Posterior cingulate gyrus (tissue), 11 donors: ENCODE measurements at regions of chr3 and their contacts with region 1.

Region 1: DNA sequence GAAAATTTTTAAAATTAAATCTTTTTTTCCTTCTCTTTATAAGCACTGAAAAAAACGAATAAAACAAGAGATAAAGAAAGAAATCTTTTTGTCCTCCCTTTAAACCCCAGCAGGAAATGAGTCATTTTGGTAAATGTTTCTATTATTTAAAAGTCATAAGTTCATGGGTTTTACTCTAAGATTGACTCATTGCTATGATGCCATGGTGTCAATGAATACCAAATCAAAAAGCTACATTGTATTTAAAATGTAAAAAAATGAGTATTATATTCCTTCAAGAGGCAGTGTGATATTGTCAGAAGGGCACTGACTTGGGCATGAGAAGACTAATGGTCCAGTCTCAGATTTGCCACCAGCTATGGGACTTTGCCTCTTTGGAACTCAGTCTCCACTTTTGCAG is 303.4 kb upstream of the DNAJC19 start:
- DNase-seq: no peak

Region 2: DNA sequence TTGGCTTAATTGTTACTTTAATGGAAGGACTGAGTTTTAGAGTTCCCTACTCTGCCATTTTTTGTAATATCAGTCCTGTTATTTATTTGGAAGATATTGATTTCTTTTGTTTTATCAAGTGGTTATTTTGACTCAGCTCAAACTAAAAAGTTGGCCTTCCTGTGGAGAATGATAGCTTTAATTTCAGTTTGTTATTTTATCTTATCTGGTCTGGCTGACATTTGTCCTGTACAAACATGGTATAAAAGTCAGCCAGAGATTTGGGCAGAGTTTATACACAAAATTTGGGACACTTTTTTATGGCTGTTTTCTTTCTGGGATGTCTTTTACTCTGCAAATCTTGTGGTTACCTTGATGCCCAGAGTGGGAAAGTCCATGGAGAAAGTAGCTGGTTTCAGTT is 262.0 kb before region 1 on chr3:
- intact Hi-C with region 1: no loop called
- DNase-seq: no peak

Region 3: DNA sequence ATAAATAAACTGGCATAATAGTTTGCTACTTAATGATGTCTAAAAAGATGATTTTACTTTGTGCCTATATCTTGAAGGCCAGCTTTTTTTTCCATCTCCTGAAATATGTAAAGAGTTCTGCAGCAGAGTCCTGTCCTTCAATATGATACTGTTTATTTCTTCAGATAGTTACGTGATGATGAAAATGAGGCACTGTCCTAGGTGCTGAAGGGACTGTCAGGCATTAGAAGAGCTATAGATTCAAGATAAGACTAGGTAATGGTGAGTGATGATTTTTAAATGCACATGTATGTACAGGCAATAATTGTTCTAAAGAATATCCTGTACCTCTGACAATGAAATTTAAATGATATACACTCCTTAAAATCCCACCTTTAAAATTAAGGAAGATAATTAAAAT is 23.5 kb after region 1 on chr3:
- intact Hi-C with region 1: loop called (anchors 1 kb)
- DNase-seq: no peak

Region 4: GRCh38 chr3:181484026-181484425 is 191.0 kb after region 1 on chr3:
- intact Hi-C with region 1: no loop called
- DNase-seq: no peak

Region 5: DNA sequence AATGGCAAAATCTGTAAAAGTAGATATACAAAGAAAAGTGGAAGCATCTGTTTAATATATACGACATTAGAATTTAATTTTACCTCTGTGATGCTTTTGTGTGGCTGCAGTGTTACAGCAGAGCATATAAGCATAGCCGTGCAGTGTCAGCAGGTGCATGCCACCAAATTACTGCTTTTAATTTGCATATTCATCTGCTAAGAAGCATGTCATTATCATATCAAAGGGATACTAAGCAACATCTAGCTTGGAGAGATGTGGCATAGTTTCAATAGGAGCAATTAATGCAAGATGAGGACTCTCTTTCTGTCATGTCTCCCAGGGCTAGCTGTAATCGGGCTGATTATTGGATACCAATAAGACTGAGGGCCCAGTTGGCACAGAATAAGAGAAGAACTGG is 204.4 kb after region 1 on chr3:
- intact Hi-C with region 1: no loop called
- DNase-seq: no peak

Region 6: GRCh38 chr3:181726351-181727330 is 433.7 kb after region 1 on chr3:
- intact Hi-C with region 1: no loop called
- DNase-seq: peak in 6 of 10 donors; percentile 39 to 92 (median 80)